ENCODE measurements at regions of chr1 and their contacts with region 1.

Region 1: GRCh38 chr1:175154629-175155472 is 37.7 kb downstream of the KIAA0040 start:
- DNase-seq: peak; percentile 48 to 61
- H3K4me3 ChIP-seq: no peak overlapping the region
- H3K27ac ChIP-seq: no peak overlapping the region
- H3K4me1 ChIP-seq: peaks cover 13% of the 10 kb centered on the region; the same call in 1 of the 2 replicates
- H3K27me3 ChIP-seq: 0 out of 2 replicates have a peak, but pooled peaks cover 6% of the 10 kb centered on the region
- CTCF ChIP-seq: peak; percentile 92

Region 2: DNA sequence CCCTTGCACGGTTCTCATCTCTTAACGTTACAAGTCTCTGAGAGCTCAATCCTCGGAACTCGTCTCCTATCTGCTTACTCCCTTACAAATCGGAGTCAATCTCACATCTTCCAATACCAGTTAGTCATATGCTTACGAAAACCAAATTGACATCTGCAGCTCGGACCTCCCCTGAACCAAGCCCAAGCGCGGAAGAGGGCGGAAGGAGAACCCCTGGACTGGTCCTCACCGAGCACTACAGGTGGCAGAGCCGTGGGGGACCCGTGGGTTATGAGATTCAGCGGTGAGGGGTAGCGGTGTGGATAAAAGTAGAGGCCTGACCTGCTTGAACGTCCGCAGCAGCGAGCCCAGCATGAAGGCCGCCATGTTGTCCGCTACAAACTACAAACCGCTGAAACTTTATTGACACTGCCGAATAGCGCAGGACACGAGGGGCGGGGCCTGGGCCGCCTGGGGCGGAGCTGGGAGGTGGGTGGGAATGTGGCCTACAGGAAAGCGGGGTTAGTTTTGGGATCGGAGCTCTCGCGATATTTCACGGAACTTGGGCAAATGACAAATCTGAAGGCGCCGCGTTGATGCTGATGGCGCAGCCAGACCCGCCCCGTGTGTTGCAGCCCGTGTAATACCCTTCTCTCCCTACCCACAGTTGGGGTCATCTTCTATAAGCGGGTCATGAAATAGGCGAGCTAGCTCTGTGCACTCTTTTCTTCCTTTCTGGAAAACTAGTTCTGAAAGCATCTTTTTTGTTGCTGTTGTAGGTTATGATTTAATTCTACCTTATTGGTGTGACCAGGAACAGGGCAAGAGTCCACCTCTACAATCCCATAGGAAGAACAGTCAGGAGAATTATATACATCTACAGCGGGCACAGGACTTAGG is 131.6 kb before region 1 on chr1 and contains the start of gene MRPS14:
- CTCF ChIA-PET with region 1: no interaction called
- POLR2A ChIA-PET with region 1: no interaction called
- intact Hi-C with region 1: loop called (anchors 5 kb)
- DNase-seq: peak; percentile 88 to 96
- H3K4me3 ChIP-seq: peak within 1 kb of the TSS; percentile 95
- H3K27ac ChIP-seq: peak within 1 kb of the TSS; percentile 82
- H3K4me1 ChIP-seq: peaks cover 12% of the 10 kb centered on the region; the same call in 1 of the 2 replicates
- H3K27me3 ChIP-seq: no peaks in the 10 kb centered on the region
- CTCF ChIP-seq: no peak
- total RNA-seq, gene MRPS14: 24.1 and 28.8 TPM in 2 replicates

Region 3: GRCh38 chr1:175221666-175222175 is 66.9 kb after region 1 on chr1:
- CTCF ChIA-PET with region 1: interaction called, 6 read pairs
- POLR2A ChIA-PET with region 1: no interaction called
- intact Hi-C with region 1: loop called (anchors 2 kb)
- DNase-seq: peak in 1 of 2 experiments; percentile 37
- H3K4me3 ChIP-seq: no peak overlapping the region
- H3K27ac ChIP-seq: no peak overlapping the region
- H3K4me1 ChIP-seq: peaks cover 28% of the 10 kb centered on the region
- H3K27me3 ChIP-seq: no peaks in the 10 kb centered on the region
- CTCF ChIP-seq: no peak

Region 4: DNA sequence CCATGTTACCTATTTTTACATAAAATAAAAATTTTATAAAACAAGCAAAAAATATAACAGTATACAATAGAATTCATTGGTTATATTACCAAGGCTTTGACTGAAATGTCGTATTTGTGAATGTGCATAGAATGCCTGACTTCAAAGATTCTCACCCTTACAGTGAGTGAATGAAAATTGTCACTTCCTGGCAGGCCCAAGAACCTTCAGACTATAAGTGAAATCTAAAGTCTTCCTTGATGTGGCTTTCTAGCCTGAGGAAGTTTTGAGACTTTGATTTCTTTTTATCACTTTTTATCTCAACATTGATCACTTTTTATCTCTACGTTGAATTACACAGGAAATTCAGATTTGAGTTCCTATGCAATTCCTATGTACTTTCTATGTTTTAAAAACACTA is 142.4 kb after region 1 on chr1:
- CTCF ChIA-PET with region 1: no interaction called
- POLR2A ChIA-PET with region 1: no interaction called
- intact Hi-C with region 1: no loop called
- DNase-seq: no peak
- H3K4me3 ChIP-seq: no peak overlapping the region
- H3K27ac ChIP-seq: no peak overlapping the region
- H3K4me1 ChIP-seq: no peaks in the 10 kb centered on the region
- H3K27me3 ChIP-seq: no peaks in the 10 kb centered on the region
- CTCF ChIP-seq: no peak

Region 5: DNA sequence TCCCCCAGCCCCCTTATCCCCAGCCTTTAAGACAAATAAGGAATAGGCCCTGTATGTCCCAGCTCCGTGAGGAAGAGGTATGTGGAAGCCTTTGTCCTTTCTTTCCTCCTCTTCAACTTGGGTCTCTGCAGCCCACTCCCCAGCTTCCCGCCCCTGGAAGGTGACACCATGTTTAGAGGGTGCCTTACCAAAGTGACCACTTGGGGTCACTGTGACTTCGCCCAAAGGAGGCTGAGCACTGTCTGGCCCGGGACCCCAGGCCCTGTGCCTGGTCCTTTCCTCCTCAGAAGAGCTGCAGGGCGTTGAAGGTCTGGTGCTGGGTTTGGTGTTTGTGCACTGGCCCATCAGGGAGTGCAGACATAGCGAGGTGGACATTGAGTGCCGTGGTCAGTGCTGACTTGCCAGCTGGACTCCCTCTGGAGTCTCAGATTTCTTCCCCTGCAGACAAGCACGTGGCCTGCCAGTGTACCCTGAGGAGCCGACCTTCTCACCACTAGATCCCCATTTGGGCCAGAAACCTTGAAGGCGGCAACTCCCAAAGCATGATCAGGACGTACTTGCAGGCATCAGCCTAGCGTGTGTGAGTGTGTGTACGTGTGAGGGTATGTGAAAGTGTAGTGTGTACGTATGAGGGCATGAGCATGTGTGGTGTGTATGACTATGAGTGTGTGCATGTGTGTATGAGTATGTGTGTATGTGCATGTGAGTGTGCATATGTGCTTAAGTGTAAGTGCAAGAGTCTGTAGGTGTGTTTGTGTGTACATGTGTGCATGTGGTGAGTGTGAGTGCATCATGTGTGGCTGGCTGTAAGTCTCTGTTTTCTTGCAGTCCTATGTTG is 219.2 kb after region 1 on chr1:
- CTCF ChIA-PET with region 1: no interaction called
- POLR2A ChIA-PET with region 1: no interaction called
- intact Hi-C with region 1: loop called (anchors 1 kb)
- DNase-seq: peak in 1 of 2 experiments; percentile 8
- H3K4me3 ChIP-seq: no peak overlapping the region
- H3K27ac ChIP-seq: no peak overlapping the region
- H3K4me1 ChIP-seq: 0 out of 2 replicates have a peak, but pooled peaks cover 6% of the 10 kb centered on the region
- H3K27me3 ChIP-seq: peaks cover 16% of the 10 kb centered on the region
- CTCF ChIP-seq: peak; percentile 77

Region 6: DNA sequence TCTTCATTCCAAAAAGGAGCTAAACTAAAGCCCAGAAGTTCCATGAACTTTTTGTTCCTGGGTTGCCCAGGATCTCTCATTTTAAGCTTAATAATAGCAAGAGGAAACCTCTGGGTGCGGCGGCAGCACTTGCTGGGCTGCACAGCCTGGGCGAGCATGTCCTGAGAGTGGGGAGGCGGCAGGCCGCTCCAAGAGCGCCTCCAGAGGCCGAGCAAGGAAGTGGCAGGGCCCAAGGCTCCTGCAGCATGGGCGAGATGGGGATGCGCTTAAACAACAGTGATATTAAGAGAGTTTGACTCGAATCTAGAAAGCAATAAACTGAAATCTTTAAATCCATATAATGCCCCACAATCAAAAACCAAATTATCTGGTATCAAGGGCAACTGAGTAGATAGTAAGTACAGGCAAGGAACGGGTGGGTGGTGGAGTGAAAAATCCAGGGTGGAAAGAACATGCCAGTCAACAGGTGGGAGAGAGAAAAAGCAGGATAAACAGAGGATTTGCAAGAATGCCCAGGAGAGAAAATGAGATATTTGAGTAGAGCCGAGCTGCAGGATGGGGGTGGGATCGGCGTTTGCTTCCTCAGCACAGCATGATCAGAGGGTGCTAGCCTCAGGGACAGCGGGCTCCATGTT is 602.6 kb after region 1 on chr1:
- CTCF ChIA-PET with region 1: no interaction called
- POLR2A ChIA-PET with region 1: no interaction called
- intact Hi-C with region 1: loop called (anchors 10 kb)
- DNase-seq: peak in 1 of 2 experiments; percentile 26
- H3K4me3 ChIP-seq: no peak overlapping the region
- H3K27ac ChIP-seq: no peak overlapping the region
- H3K4me1 ChIP-seq: no peaks in the 10 kb centered on the region
- H3K27me3 ChIP-seq: peaks cover 57% of the 10 kb centered on the region
- CTCF ChIP-seq: peak; percentile 73

Region 7: DNA sequence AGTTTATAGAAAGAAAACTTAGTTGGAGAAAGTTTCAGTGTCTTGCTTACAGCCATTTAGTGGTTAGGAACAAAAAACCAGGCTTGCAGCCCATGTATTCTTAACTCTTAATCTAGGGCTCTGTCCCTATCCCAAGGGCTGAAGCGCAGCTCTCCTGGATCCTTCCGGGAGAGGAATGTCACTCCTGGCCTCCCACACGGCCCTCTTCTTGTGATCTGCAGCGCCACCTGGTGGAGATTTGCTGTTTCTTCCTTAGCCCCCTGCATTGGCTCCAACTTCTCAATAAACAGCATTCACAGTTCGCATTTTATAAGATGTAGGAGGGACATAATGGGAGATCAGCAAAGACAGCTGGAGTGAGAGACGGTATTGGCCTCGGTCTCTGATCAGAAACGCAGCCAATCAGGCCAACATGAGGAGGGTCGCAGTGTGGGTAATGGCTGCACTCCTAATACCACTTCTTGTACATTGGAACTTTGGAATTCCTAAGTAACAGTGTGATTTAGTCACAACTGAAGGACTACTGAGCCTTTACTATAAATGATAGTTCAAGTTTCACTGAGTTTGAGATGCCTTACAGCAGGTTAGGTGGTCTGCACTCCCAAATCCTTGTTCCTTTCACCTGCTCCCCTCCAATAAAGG is 1726.2 kb after region 1 on chr1:
- CTCF ChIA-PET with region 1: no interaction called
- POLR2A ChIA-PET with region 1: no interaction called
- intact Hi-C with region 1: loop called (anchors 5 kb)
- DNase-seq: peak in 1 of 2 experiments; percentile 38
- H3K4me3 ChIP-seq: no peak overlapping the region
- H3K27ac ChIP-seq: no peak overlapping the region
- H3K4me1 ChIP-seq: no peaks in the 10 kb centered on the region
- H3K27me3 ChIP-seq: peaks cover 17% of the 10 kb centered on the region
- CTCF ChIP-seq: peak; percentile 89

Measured in PC-9 (cell line).